Endothelial cell of umbilical vein (primary cell): ENCODE measurements at regions of chr7 and their contacts with region 1.

Region 1: DNA sequence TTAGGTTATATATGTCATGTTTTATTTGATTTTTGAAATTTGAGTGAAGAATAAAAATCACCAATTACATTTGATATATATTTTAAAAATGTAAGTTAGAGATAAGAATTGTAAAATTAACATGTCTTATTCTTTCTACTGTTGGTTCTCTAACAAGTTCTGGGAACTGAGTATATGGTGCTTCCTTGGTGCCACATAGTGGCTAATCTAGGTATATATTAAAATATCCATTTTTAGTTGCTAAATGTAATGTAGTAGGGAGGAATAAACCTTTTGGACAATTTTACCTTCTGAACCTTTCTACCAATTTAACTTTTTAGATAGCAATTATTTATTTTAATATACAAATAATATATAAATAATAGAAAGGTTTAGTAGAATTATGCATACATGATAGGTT is 17.5 kb downstream of the CFAP69 start:
- DNase-seq: peak; percentile 54
- H3K4me3 ChIP-seq: no peak overlapping the region
- H3K27ac ChIP-seq: no peak overlapping the region
- H3K4me1 ChIP-seq: peaks cover 8% of the 10 kb centered on the region
- H3K27me3 ChIP-seq: no peaks in the 10 kb centered on the region
- CTCF ChIP-seq: peak in 1 of 2 donors; percentile 15
- POLR2A ChIP-seq: no peak

Region 2: DNA sequence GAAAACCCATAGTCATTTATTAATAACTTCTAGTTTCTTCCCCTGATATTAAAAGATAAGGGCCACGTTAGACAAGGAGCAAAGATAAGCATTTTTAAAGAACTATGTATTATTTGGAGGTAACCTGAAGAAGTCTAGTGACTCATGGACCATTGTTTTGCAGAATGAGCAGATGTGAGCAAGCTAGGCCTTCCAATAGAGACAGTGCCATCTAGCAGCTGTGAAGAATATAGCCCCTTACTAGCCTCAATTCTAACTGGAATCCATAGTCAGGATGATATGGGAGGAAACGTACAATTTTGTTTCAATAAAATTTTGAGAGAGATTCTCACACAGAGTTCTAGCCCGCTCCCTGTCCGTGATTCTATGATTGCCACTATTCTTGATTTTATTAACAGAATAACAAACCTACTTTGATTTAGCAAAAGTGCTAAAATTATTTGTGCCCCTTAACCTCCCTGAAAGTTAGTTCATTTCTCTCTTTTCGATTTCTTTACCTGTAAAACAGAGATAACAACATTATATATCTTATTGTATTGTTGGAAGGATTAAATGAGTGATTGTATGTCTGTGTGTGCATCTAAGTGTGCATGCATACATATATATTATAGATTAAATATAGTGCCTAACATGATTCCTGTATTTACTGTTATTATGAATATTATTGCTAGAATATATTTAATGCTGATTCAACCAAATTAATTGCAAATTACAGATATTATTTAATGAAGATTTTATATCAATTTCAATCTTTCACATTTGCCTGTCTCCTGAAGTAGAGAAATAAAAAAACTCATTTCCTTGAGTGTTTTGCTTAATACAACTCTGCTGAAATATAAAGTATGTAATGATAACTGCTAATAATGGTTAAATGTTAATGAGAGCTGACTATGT is 36.0 kb after region 1 on chr7:
- CTCF ChIA-PET with region 1: interaction called, 5 read pairs
- POLR2A ChIA-PET with region 1: no interaction called
- dilution Hi-C with region 1: no loop called
- intact Hi-C with region 1: loop called (anchors 1 kb)
- DNase-seq: peak; percentile 66
- H3K4me3 ChIP-seq: no peak overlapping the region
- H3K27ac ChIP-seq: no peak overlapping the region
- H3K4me1 ChIP-seq: no peaks in the 10 kb centered on the region
- H3K27me3 ChIP-seq: no peaks in the 10 kb centered on the region
- CTCF ChIP-seq: peak; percentile 48 to 65
- POLR2A ChIP-seq: no peak